ENCODE measurements at regions of chr14 and their contacts with region 1.

Region 1: GRCh38 chr14:77714926-77715325 is 7.0 kb downstream of the SLIRP start:
- DNase-seq: no peak
- H3K4me3 ChIP-seq: no peak overlapping the region
- H3K27ac ChIP-seq: no peak overlapping the region
- H3K4me1 ChIP-seq: peaks cover 9% of the 10 kb centered on the region
- CTCF ChIP-seq: no peak

Region 2: DNA sequence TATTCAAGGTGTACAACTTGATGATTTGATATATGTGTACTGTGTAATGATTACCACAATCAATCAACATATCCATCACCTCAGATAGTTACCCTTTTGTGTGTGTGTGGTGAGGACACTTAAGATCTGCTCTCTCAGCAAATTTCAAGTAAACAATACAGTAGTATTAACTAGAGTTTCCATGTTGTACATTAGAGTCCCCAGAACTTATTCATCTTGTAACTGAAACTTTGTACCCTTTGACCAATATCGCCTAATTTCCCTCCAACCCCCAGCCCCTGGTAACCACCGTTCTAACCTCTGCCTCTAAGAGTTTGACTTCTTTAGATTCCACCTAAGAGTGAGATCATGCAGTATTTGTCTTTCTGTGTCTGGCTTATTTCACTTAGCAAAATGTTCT is 97.1 kb after region 1 on chr14:
- CTCF ChIA-PET with region 1: no interaction called
- POLR2A ChIA-PET with region 1: no interaction called
- intact Hi-C with region 1: loop called (anchors 5 kb)
- DNase-seq: no peak
- H3K4me3 ChIP-seq: no peak overlapping the region
- H3K27ac ChIP-seq: no peak overlapping the region
- H3K4me1 ChIP-seq: no peaks in the 10 kb centered on the region
- CTCF ChIP-seq: no peak

Region 3: GRCh38 chr14:77838831-77839511 is 124.0 kb after region 1 on chr14:
- CTCF ChIA-PET with region 1: no interaction called
- POLR2A ChIA-PET with region 1: no interaction called
- intact Hi-C with region 1: no loop called
- DNase-seq: no peak
- H3K4me3 ChIP-seq: no peak overlapping the region
- H3K27ac ChIP-seq: no peak overlapping the region
- H3K4me1 ChIP-seq: no peaks in the 10 kb centered on the region
- CTCF ChIP-seq: no peak

Measured in OCI-LY7 (cell line).